Astrocyte of the cerebellum (primary cell): ENCODE measurements at regions of chr1 and their contacts with region 1.

Region 1: DNA sequence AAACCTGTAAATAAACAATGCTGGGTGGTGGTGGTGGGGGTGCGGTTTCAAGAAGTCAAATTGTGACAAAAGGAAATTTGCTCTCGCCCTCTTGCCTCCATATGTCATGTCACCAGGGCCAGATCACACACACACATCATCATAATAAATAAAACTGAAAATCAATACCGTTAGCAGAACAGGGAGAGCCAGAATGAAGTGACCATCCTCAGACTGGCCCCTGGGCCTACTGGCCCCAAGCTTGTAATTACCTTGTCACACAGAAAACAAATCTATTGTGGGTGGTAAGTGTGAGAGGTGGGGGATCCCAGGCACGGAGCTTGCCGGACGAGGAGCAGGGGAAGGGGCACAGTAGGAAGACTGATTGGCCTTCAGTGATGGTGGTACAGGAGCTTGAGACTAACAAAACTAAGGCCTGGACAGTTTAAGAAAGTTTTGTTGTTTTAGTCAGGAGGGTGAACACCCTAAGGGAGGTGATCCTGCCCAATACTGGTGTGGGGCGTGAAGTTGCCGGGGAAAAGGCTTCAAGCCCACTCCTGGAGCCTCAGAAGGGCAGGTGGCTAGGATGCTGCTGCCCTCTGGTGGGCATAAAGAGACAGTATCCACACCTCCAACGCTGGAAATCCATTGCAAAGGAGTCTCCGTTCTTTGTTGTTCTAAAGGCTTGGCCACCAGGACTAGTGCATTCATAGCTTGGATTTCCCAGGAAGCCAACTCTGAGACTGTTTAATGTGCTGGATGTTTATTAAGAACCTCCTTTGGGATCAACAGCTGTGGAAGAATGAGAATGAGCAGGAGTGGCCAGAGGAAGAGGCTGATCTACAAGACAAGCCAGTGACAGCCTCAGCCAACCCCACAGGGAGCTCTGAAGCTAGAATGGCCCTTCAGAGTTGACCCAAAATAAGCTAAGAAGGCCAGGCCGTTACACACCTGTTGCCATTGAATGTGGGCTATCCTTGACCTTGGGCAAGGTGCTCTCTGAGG is 8.1 kb upstream of the C1orf216 start:
- DNase-seq: peak; percentile 42
- H3K4me3 ChIP-seq: no peak overlapping the region
- CTCF ChIP-seq: peak; percentile 89

Region 2: DNA sequence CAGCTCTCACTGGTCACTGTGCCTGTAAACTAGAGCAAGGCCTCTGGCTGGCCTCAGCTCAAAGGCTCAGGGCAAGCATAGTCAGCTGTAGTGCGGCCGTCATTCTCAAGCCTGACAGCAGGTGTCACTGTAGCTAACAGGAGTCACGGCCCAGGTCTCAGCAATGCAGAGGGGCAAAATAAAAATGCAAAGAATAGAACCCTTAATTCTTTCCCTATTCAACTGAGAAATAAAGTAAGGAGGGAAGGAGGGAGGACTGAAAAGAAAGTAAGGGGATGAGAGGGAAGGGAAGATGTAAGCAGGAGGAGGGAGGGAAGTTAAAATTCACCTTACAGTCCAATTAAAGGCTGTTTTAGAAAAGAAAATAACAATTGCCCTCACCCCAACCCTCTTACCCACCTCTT is 275.6 kb before region 1 on chr1:
- in situ Hi-C with region 1: loop called (anchors 25 kb)
- DNase-seq: peak; percentile 63
- H3K4me3 ChIP-seq: no peak overlapping the region
- CTCF ChIP-seq: peak; percentile 93

Region 3: GRCh38 chr1:35568975-35569395 is 157.8 kb before region 1 on chr1:
- in situ Hi-C with region 1: loop called (anchors 5 kb)
- DNase-seq: peak; percentile 48
- H3K4me3 ChIP-seq: no peak overlapping the region
- CTCF ChIP-seq: peak; percentile 91

Region 4: DNA sequence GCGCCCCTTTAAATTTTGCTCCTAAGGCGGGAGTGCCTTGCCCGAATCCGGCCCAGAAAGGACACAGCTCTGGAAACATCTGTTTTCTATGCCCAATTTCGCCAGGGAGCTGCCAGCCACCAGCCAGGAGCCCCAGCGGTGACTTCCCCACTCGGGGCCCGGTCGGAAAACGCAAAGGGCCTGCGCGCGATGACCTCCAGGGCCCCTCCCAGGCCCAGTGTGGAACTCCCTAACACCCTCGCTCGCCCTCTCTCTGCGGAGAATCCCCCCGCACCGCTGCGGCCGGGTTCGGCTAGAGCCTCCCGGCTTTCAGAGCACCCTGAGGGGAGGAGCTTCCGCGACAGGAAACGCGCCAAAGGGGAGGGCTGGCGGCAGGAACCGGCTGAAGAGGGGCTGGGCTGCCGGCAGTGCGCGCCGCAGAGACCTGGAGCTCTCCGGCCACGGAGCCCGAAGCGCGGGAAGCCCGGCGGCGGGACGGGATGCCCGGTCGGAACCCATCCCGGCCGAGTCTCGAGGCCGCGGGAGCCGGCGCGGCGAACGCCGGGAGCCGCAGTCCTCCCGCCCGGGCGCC is 42.5 kb after region 1 on chr1:
- in situ Hi-C with region 1: no loop called
- DNase-seq: peak; percentile 58
- H3K4me3 ChIP-seq: peak overlapping the region; percentile 83
- CTCF ChIP-seq: no peak